ENCODE measurements at regions of chr12 and their contacts with region 1.

Region 1: GRCh38 chr12:49088190-49088931 is 6.2 kb downstream of the DHH start:
- DNase-seq: peak; percentile 55 to 79 (median 66)
- H3K4me3 ChIP-seq: no peak overlapping the region
- H3K4me3 Mint-ChIP-seq: peak overlapping the region in 5 of 7 donors; percentile 31 to 47 (median 44)
- H3K27ac ChIP-seq: no peak overlapping the region
- H3K27ac Mint-ChIP-seq: peak overlapping the region in 2 of 8 donors; percentile 19 to 43
- H3K4me1 ChIP-seq: peaks cover 46% of the 10 kb centered on the region
- H3K4me1 Mint-ChIP-seq: peaks cover 29 to 51% (median 49%) of the 10 kb centered on the region in 3 donors
- H3K27me3 ChIP-seq: peaks cover 45% of the 10 kb centered on the region
- H3K27me3 Mint-ChIP-seq: peaks cover 43 to 47% of the 10 kb centered on the region in 2 donors

Region 2: DNA sequence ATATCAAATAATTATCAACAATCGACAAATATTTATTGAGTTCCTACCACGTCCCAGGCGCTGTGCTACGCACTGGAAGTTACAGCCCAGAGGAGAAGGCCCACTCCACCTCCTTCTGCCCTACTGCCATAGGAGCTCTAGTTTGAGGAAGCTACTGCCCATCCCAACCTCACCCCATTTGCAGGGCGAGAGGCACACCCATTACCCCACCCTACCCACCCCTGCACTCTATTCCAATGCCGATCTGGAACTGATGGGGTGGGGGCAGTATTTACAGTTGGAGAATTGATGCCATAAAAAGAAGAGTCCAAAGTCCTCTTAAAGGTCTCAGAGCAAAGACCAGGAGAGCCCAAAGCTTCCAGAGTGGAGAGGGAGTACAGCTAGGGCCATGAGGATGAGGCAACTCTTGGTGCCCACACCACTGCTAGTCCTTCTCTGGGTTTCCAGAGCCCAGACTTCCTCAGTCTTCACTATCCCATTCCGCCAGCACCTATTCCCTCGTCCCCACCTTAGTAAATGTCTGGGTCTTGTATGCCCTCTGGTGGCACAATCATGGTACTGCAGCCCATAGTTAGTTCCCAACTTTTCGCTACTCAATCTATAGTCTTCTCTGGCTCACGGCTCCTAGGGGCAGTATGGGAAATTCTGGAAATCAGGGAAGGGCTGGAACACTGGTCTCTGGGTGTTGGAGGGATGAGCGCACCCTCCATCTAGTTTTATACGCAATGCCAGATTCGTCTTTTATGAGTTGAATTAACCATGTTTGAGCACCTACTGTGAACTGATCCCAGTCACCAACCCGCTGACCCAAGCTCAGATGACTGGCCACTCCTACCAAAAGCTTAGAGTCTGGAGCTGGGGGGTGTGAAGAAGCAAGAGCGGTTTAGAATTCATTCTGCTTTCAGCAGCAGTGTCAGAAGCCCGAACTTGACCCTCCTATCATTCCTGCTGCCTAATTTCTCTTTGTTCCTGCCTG is 292.6 kb before region 1 on chr12:
- CTCF ChIA-PET with region 1: no interaction called
- POLR2A ChIA-PET with region 1: no interaction called
- DNase-seq: peak; percentile 32 to 67 (median 49)
- H3K4me3 ChIP-seq: no peak overlapping the region
- H3K4me3 Mint-ChIP-seq: no peak overlapping the region
- H3K27ac ChIP-seq: no peak overlapping the region
- H3K27ac Mint-ChIP-seq: peak overlapping the region in 1 of 8 donors; percentile 41
- H3K4me1 ChIP-seq: no peaks in the 10 kb centered on the region
- H3K4me1 Mint-ChIP-seq: peaks cover 0 to 5% (median 3%) of the 10 kb centered on the region in 3 donors
- H3K27me3 ChIP-seq: no peaks in the 10 kb centered on the region
- H3K27me3 Mint-ChIP-seq: peaks cover 9 to 17% of the 10 kb centered on the region in 2 donors

Region 3: DNA sequence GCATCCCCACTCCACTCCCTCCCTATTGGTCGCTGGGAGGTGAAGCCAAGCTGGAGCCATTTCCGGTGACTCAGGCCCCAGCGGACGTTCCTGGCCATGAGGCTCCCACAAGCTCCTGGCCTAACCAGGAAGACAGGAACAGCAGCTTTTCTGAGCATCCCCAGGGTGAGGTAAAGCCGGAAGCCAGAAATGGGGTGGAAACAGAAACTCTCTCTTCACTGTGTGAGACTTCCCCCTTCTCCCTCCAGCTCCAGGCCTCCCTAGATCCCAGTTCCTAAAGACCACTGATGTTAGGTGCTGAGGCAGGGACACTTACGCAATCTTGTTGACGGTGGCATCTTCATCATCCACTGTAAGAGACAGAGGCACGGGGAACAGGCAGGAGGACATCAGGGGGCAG is 17.2 kb after region 1 on chr12:
- CTCF ChIA-PET with region 1: interaction called, 86 read pairs
- POLR2A ChIA-PET with region 1: interaction called, 4 read pairs
- DNase-seq: no peak
- H3K4me3 ChIP-seq: no peak overlapping the region
- H3K4me3 Mint-ChIP-seq: no peak overlapping the region
- H3K27ac ChIP-seq: no peak overlapping the region
- H3K27ac Mint-ChIP-seq: peak overlapping the region in 1 of 8 donors; percentile 78
- H3K4me1 ChIP-seq: peaks cover 14% of the 10 kb centered on the region
- H3K4me1 Mint-ChIP-seq: peaks cover 31 to 42% (median 35%) of the 10 kb centered on the region in 3 donors
- H3K27me3 ChIP-seq: no peaks in the 10 kb centered on the region
- H3K27me3 Mint-ChIP-seq: no peaks in the 10 kb centered on the region

Region 4: GRCh38 chr12:49121047-49121696 is 32.8 kb after region 1 on chr12:
- CTCF ChIA-PET with region 1: interaction called, 17 read pairs
- POLR2A ChIA-PET with region 1: no interaction called
- DNase-seq: no peak
- H3K4me3 ChIP-seq: no peak overlapping the region
- H3K4me3 Mint-ChIP-seq: no peak overlapping the region
- H3K27ac ChIP-seq: no peak overlapping the region
- H3K27ac Mint-ChIP-seq: no peak overlapping the region
- H3K4me1 ChIP-seq: no peaks in the 10 kb centered on the region
- H3K4me1 Mint-ChIP-seq: peaks cover 0 to 1% (median 0%) of the 10 kb centered on the region in 3 donors
- H3K27me3 ChIP-seq: no peaks in the 10 kb centered on the region
- H3K27me3 Mint-ChIP-seq: peaks cover 0 to 1% of the 10 kb centered on the region in 2 donors

Region 5: DNA sequence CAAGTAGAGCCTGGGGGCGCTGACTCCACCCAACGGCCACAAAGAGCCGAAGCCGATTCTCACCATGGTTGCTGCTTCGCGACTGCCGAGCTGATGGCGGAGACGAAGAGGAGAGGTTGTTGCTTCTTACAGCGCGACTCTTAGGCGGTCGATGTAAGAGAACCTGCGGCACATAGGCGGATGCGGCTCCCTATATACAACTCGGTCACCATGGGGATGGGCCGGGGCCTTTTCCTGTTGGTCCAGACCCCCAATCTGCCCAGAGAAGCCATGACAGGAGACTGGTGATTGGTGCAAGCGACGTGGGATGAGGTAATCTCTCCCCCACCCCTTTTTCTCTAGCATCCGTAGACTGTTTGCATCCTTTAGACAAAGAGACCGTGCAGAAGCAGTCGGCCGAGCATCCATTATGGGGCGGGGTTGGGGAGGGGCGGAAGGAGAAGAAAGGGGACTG is 100.6 kb after region 1 on chr12 and contains the start of gene TUBA1A:
- CTCF ChIA-PET with region 1: interaction called, 15 read pairs
- POLR2A ChIA-PET with region 1: interaction called, 6 read pairs
- DNase-seq: peak; percentile 90 to 99 (median 97)
- H3K4me3 ChIP-seq: peak within 1 kb of the TSS; percentile 79
- H3K4me3 Mint-ChIP-seq: peak within 1 kb of the TSS; percentile 97 to 99 (median 98)
- H3K27ac ChIP-seq: peak within 1 kb of the TSS; percentile 97
- H3K27ac Mint-ChIP-seq: peak within 1 kb of the TSS; percentile 97 to 100 (median 98)
- H3K4me1 ChIP-seq: peaks cover 18% of the 10 kb centered on the region
- H3K4me1 Mint-ChIP-seq: peaks cover 26 to 40% (median 35%) of the 10 kb centered on the region in 3 donors
- H3K27me3 ChIP-seq: no peaks in the 10 kb centered on the region
- H3K27me3 Mint-ChIP-seq: peaks cover 0 to 8% of the 10 kb centered on the region in 2 donors
- total RNA-seq, gene TUBA1A: 67.8 to 70.4 TPM

Region 6: GRCh38 chr12:49232940-49233841 is 144.8 kb after region 1 on chr12:
- CTCF ChIA-PET with region 1: interaction called, 28 read pairs
- POLR2A ChIA-PET with region 1: interaction called, 6 read pairs
- DNase-seq: no peak
- H3K4me3 ChIP-seq: no peak overlapping the region
- H3K4me3 Mint-ChIP-seq: peak overlapping the region; percentile 27 to 84 (median 63)
- H3K27ac ChIP-seq: peak overlapping the region; percentile 66
- H3K27ac Mint-ChIP-seq: peak overlapping the region in 3 of 8 donors; percentile 38 to 73 (median 72)
- H3K4me1 ChIP-seq: peaks cover 5% of the 10 kb centered on the region
- H3K4me1 Mint-ChIP-seq: peaks cover 0 to 10% (median 4%) of the 10 kb centered on the region in 3 donors
- H3K27me3 ChIP-seq: no peaks in the 10 kb centered on the region
- H3K27me3 Mint-ChIP-seq: peaks cover 0 to 1% of the 10 kb centered on the region in 2 donors

Measured in CD8-positive, alpha-beta memory T cell (primary cell).